Tibial artery (tissue), 4 donors: ENCODE measurements at regions of chr1 and their contacts with region 1.

Region 1: DNA sequence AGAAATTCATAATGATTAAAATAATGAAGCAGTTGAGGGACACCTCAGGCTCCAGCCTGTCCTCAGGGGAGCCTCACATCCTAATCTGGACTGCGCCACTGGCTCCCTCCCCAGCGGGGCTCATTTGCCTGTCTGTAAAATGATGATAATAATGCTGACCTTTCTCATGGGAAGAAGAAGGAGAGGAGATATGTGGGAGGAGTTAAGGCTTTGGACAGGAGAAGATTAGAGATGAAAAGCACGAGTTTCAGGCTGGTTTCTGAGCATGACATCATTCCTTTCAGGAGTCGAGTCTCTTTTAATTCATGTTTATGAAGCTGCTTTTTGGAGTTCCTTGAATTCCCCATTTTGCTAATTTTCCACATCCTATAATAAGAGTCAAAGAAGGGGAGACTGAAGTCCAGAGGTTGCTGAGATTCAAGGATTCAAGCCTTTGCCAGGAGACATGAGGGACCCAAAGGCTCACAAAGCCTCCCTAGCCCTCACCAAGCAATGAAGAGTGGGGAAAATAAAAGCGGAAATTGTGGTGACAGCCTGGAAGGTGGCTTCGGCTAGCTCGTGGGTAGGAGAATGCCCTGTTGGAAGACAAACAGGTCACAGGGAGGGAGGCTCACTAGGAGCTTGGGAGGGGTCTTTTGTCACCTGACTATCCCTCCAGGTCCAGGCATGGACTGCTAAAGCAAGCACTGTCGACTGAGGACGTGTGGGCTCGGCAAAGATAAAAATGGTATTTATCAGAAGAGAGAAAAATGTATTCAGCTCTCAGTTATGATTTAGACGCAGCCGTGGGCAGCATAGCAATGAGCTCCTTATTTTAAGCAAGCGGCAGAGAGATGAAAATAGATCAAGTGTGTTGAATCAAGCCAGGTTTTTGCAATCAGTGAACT is 27.5 kb upstream of the STMN1 start:
- DNase-seq: no peak
- H3K4me3 ChIP-seq: no peak overlapping the region
- H3K27ac ChIP-seq: no peak overlapping the region
- H3K4me1 ChIP-seq: no peaks in the 10 kb centered on the region
- H3K27me3 ChIP-seq: peaks cover 0 to 3% of the 10 kb centered on the region in 2 donors
- CTCF ChIP-seq: no peak

Region 2: GRCh38 chr1:25873120-25873519 is 60.6 kb before region 1 on chr1:
- intact Hi-C with region 1: no loop called
- DNase-seq: no peak
- H3K4me3 ChIP-seq: no peak overlapping the region
- H3K27ac ChIP-seq: no peak overlapping the region
- H3K4me1 ChIP-seq: peaks cover 0 to 30% (median 18%) of the 10 kb centered on the region in 4 donors
- H3K27me3 ChIP-seq: no peaks in the 10 kb centered on the region
- CTCF ChIP-seq: no peak

Region 3: GRCh38 chr1:25952841-25953401 is 19.2 kb after region 1 on chr1:
- intact Hi-C with region 1: loop called (anchors 2 kb)
- DNase-seq: no peak
- H3K4me3 ChIP-seq: no peak overlapping the region
- H3K27ac ChIP-seq: no peak overlapping the region
- H3K4me1 ChIP-seq: no peaks in the 10 kb centered on the region
- H3K27me3 ChIP-seq: peaks cover 0 to 6% of the 10 kb centered on the region in 2 donors
- CTCF ChIP-seq: no peak

Region 4: DNA sequence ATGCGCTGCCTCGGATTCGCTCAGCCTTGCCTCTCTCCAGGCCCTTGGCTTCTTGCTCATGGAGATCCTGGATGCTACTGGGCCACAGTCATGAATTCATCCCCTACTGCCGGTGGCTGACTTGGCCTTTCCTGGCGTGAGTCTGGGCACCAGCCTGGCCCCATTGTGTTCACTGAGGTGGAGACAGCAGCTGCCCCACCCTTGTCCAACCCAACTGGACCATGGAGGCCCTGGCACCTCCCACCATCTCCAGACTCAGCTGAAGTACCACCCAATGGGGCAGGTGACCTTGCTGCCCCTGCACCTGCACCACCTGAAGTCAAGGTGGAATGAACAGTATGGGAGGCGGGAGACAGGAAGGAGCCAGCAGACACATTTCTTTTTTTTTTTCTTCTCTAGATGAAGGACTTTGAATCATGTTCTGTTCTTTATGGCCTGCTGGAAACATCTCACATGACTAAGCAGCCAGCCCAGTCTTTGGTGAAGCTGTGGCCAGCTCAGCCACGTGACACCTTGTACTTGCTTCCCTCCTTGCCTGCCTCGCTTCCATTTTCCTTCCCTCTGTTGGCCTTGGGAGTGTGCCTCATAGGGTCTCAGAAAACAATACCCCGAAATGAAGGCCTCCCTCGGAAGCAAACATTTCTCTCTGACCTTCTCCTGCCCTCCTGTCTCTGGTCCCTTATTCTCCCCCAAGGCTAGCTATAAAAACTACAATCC is 116.0 kb after region 1 on chr1:
- intact Hi-C with region 1: no loop called
- DNase-seq: no peak
- H3K4me3 ChIP-seq: no peak overlapping the region
- H3K27ac ChIP-seq: no peak overlapping the region
- H3K4me1 ChIP-seq: peaks cover 0 to 18% (median 12%) of the 10 kb centered on the region in 4 donors
- H3K27me3 ChIP-seq: peaks cover 3 to 54% of the 10 kb centered on the region in 2 donors
- CTCF ChIP-seq: no peak